Left cardiac atrium (tissue), 4 donors: ENCODE measurements at regions of chr3 and their contacts with region 1.

Region 1: GRCh38 chr3:152471814-152472671 is 203.3 kb downstream of the MBNL1 start:
- DNase-seq: peak; percentile 49
- ATAC-seq: peak; percentile 80 to 84

Region 2: DNA sequence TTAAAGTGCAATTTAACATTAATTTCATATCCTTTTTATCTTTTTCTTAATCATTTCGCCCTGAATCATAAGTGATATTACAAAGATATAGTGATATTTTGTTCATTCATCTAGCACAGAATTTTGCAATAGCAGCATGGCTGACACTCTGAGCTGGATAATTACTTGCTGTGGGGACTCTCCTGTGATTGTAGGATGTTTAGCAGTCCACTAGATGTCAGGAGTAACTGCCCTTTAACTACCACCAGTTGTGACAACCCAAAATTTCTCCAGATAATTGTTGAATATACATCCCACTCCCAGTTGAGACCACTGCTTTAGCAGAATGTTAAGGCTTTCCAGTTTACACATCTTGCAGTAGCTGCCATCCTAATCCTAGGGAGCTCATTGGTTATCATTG is 400.1 kb before region 1 on chr3:
- intact Hi-C with region 1: loop called in 1 of 2 experiments (anchors 5 kb)
- DNase-seq: no peak
- ATAC-seq: peak in 1 of 2 donors; percentile 54

Region 3: GRCh38 chr3:152183473-152183872 is 288.6 kb before region 1 on chr3:
- intact Hi-C with region 1: loop called in 1 of 2 experiments (anchors 5 kb)
- DNase-seq: peak; percentile 43
- ATAC-seq: peak; percentile 67 to 79

Region 4: GRCh38 chr3:152574461-152575079 is 102.5 kb after region 1 on chr3:
- intact Hi-C with region 1: loop called in 1 of 2 experiments (anchors 2 kb)
- DNase-seq: peak; percentile 63
- ATAC-seq: peak; percentile 68 to 78